H1 (cell line): ENCODE measurements at regions of chr12 and their contacts with region 1.

Region 1: DNA sequence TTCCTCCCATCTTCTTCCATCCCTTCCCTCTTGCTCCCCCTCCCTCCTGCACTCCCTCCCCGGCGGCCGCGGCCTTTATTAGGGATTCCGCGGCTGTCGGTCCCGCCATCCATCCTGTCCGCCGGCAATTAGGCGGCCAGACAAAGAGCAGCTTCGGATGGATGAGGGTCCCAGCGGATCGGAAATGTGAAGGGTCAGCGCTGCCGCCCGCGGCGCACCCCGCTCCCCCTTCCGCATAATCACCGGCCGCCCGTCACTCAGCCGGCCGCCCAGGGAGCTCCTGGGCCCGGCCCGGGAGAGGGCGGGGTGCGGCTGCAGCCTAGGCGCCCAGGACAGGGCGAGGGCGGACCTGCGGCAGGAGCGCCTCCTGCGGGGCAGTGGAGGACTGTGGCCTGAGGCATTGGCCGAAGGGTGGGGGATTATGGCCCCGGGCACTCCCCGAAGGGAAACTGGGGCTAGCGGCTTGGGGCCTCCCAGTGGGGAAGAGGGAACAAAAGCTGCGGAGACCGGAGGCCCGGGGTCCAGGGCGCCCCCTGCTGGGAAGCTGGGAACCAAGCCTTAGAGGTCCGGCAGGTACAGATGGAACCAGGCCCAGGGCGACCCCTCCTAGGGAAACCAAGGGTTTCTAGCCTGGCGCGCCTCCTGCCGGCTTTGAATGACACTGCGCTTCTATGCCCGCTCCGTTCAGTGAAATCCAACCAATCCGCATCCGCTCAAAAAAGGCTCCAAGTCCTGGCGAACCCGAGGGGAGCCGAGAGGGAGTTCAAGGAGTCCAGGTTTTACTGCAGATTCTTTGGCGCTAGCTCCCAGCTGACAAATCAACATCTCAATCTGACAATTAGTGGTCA is 4.4 kb upstream of the DNAJC22 start:
- DNase-seq: peak; percentile 93 to 99
- H3K4me3 ChIP-seq: peak overlapping the region; percentile 34 to 78 (median 67)
- H3K27ac ChIP-seq: no peak overlapping the region
- H3K4me1 ChIP-seq: peaks cover 4 to 61% (median 41%) of the 10 kb centered on the region in 4 experiments
- H3K27me3 ChIP-seq: peaks cover 81 to 99% (median 97%) of the 10 kb centered on the region in 4 experiments
- CTCF ChIP-seq: peak; percentile 71 to 93 (median 90)
- EP300 ChIP-seq: no peak; a peak in 1 of 3 replicates
- POLR2A ChIP-seq: no peak
- RAD21 ChIP-seq: peak; percentile 59 to 63

Region 2: GRCh38 chr12:49033611-49034316 is 308.5 kb before region 1 on chr12:
- CTCF ChIA-PET with region 1: no interaction called
- POLR2A ChIA-PET with region 1: no interaction called
- DNase-seq: no peak
- H3K4me3 ChIP-seq: no peak overlapping the region
- H3K27ac ChIP-seq: no peak overlapping the region
- H3K4me1 ChIP-seq: no peaks in the 10 kb centered on the region
- H3K27me3 ChIP-seq: no peaks in the 10 kb centered on the region
- CTCF ChIP-seq: no peak
- EP300 ChIP-seq: no peak
- POLR2A ChIP-seq: no peak
- RAD21 ChIP-seq: no peak

Region 3: DNA sequence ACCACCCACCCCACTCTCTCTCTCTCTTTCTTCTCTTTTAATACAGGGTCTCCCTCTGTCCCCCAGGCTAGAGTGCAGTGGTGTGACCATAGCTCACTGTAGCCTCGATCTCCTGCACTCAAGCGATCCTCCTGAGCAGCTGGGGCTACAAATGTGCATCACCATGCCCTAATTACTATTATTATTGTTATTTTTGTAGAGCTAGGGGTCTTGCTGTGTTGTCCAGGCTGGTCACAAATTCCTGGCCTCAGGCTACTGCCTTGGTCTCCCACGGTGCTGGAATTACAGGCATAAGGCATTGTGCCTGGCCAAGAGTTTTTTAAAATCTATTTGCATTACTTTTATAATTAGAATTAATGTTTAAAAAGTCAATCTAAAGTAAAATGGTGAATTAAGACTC is 188.1 kb before region 1 on chr12:
- CTCF ChIA-PET with region 1: no interaction called
- POLR2A ChIA-PET with region 1: no interaction called
- DNase-seq: no peak
- H3K4me3 ChIP-seq: no peak overlapping the region
- H3K27ac ChIP-seq: no peak overlapping the region
- H3K4me1 ChIP-seq: no peaks in the 10 kb centered on the region
- H3K27me3 ChIP-seq: no peaks in the 10 kb centered on the region
- CTCF ChIP-seq: no peak
- EP300 ChIP-seq: no peak
- POLR2A ChIP-seq: no peak
- RAD21 ChIP-seq: no peak

Region 4: DNA sequence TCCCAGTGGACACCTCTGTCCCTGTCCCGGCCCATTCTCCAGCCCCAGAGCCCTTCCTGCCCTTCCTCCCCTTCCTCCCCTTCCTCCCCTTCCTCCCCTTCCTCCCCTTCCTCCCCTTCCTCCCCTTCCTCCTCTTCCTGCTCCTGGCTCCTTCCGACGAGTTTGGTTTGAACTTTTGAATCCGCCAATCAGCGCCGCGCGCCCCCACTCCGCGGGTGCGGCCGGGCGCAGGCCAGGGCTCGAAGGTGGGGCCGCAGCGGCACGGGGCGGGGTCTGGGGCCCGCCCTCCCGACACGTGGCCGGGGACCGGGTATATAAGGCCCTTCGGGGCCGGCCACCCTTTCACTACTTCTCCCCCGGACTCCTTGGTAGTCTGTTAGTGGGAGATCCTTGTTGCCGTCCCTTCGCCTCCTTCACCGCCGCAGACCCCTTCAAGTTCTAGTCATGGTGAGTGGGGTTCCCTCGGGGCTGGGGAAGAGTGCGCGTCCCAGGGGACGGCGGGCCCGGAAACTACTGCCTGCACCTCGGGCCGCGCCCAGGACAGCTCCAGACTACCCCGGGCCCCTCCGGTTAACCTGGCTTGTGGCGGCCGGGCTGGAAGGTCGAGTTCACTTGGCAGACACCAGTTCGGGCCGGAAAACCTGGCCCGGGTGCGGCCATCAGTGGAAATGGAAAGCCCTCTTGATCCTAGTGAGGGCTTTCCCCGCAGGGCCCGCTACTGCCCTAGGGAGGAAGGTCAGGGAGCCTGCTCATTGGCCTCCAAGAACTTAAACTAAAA is 77.4 kb before region 1 on chr12 and contains the start of gene TUBA1C:
- CTCF ChIA-PET with region 1: interaction called, 10 read pairs
- POLR2A ChIA-PET with region 1: interaction called, 5 read pairs
- DNase-seq: peak; percentile 85 to 97
- H3K4me3 ChIP-seq: peak within 1 kb of the TSS; percentile 80 to 94 (median 90)
- H3K27ac ChIP-seq: peak within 1 kb of the TSS; percentile 71; the same call in 1 of the 2 replicates
- H3K4me1 ChIP-seq: peaks cover 0 to 2% (median 0%) of the 10 kb centered on the region in 4 experiments; a peak in 4 of 7 replicates
- H3K27me3 ChIP-seq: no peaks in the 10 kb centered on the region
- CTCF ChIP-seq: no peak
- EP300 ChIP-seq: no peak
- POLR2A ChIP-seq: peak; percentile 97 to 99
- RAD21 ChIP-seq: no peak
- total RNA-seq, gene TUBA1C: 504 and 533 TPM in 2 replicates

Region 5: DNA sequence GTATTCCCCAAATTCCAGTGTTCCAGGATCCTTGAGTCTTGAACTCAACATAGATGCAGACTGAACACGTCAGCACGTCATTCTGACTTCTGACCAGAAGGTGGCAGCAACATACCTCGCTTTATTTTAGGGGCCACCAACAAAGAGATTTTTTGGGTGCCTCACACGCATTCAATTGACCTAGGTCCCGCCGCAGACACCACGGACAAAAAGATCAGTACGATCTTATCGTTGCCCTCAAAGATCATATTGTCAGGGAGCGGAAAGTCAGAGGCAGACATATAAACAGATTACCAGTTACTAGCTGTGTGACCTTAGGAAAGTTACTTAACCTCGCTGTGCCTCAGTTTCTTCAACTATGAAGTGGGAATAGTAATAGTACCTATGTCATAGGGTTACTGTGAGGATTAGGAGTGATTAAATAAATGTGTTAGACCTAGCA is 53.9 kb before region 1 on chr12:
- CTCF ChIA-PET with region 1: interaction called, 276 read pairs
- POLR2A ChIA-PET with region 1: interaction called, 26 read pairs
- DNase-seq: peak in 1 of 2 experiments; percentile 82
- H3K4me3 ChIP-seq: no peak overlapping the region
- H3K27ac ChIP-seq: no peak overlapping the region
- H3K4me1 ChIP-seq: peaks cover 0 to 9% (median 7%) of the 10 kb centered on the region in 4 experiments; a peak in 5 of 7 replicates
- H3K27me3 ChIP-seq: peaks cover 4 to 17% (median 16%) of the 10 kb centered on the region in 4 experiments
- CTCF ChIP-seq: peak in 2 of 3 experiments; percentile 79 to 87; a peak in 3 of 4 replicates
- EP300 ChIP-seq: no peak
- POLR2A ChIP-seq: no peak
- RAD21 ChIP-seq: peak; percentile 84 to 86

Region 6: DNA sequence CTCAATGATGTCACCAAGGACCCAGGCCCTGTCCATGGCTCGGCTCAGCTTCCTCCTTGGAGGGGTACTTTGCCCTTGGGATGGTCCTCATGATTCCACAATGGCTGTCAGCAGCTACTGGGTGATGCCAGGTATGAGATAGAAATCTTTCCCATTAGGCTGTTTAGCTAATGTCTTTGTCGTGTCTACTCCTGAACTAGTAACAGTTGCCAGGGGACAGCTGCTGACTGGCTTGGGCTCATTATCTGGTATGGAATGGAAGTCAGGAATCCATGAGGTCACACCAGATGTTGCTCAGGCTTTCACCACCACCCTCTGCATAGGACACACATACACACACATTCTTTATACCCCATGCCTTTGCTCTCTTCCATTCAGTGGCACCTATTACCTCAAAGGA is 38.1 kb before region 1 on chr12:
- CTCF ChIA-PET with region 1: interaction called, 276 read pairs
- POLR2A ChIA-PET with region 1: no interaction called
- DNase-seq: no peak
- H3K4me3 ChIP-seq: no peak overlapping the region
- H3K27ac ChIP-seq: no peak overlapping the region
- H3K4me1 ChIP-seq: no peaks in the 10 kb centered on the region
- H3K27me3 ChIP-seq: no peaks in the 10 kb centered on the region; a peak in 4 of 7 replicates
- CTCF ChIP-seq: no peak
- EP300 ChIP-seq: no peak
- POLR2A ChIP-seq: no peak
- RAD21 ChIP-seq: no peak

Region 7: GRCh38 chr12:49331380-49332222 is 10.7 kb before region 1 on chr12:
- CTCF ChIA-PET with region 1: interaction called, 193 read pairs
- POLR2A ChIA-PET with region 1: interaction called, 32 read pairs
- DNase-seq: peak in 1 of 2 experiments; percentile 68
- H3K4me3 ChIP-seq: no peak overlapping the region
- H3K27ac ChIP-seq: no peak overlapping the region
- H3K4me1 ChIP-seq: no peaks in the 10 kb centered on the region; a peak in 2 of 7 replicates
- H3K27me3 ChIP-seq: peaks cover 33 to 50% (median 43%) of the 10 kb centered on the region in 4 experiments
- CTCF ChIP-seq: peak; percentile 86 to 89 (median 88)
- EP300 ChIP-seq: no peak
- POLR2A ChIP-seq: no peak
- RAD21 ChIP-seq: peak; percentile 86 to 93

Region 8: GRCh38 chr12:49388682-49389386 is 46.5 kb after region 1 on chr12:
- CTCF ChIA-PET with region 1: no interaction called
- POLR2A ChIA-PET with region 1: no interaction called
- DNase-seq: peak; percentile 58 to 90
- H3K4me3 ChIP-seq: peak overlapping the region in 1 of 4 experiments; percentile 32; a peak in 1 of 8 replicates
- H3K27ac ChIP-seq: no peak overlapping the region
- H3K4me1 ChIP-seq: peaks cover 0 to 4% (median 2%) of the 10 kb centered on the region in 4 experiments; a peak in 3 of 7 replicates
- H3K27me3 ChIP-seq: peaks cover 0 to 2% (median 0%) of the 10 kb centered on the region in 4 experiments; a peak in 1 of 7 replicates
- CTCF ChIP-seq: peak; percentile 87 to 91 (median 87)
- EP300 ChIP-seq: 0 out of 3 replicates have a peak, but pooled peaks of 1 of the 2 experiments have one; percentile 58
- POLR2A ChIP-seq: no peak
- RAD21 ChIP-seq: peak; percentile 41 to 54; a peak in 3 of 4 replicates

Region 9: DNA sequence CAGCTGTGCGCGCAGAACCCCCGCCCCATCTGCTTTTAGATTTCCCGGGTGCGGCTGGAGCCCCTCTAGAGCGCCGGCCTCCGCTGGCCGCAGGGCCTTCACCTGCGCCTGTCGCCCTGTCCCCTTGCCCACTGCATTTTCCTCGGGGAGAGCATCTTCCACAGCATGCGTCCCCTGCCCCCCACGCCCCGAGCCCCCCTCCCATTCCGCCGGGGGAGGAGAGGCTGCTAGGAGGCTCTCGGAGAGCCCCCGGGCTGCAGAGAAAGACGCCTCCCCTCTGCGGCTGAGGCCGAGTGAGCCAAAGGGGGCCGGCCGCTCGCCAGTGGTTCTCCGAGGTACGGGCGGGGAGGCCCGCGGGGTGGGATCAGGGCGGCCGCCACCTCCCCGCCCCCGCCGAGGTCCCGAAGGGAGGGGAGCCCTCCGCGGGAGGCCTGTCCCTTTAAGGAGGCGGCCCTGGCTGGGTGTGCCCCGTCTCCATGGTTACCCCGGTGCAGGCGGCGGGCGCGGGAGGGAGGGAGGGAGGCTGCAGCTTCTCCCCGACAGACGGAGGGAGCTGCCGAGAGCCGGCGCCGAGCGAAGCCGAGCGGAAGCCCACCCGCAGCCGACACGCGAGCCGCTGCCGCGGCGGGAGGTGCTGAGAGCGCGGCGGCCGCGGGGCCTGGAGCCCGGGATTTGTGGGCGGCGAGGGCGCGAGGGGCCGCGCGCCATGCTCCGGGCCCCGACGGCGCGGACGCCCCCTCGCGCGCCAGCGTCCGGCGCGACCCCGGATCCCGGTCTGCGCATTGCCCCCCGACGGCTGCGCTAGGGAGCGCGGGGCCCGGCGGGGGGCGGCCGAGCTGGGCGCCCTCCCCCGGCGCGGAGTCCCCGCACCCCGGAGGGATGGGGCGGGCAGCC is 196.5 kb after region 1 on chr12 and contains the start of gene KCNH3:
- CTCF ChIA-PET with region 1: interaction called, 22 read pairs
- POLR2A ChIA-PET with region 1: interaction called, 5 read pairs
- DNase-seq: peak in 1 of 2 experiments; percentile 76
- H3K4me3 ChIP-seq: peak within 1 kb of the TSS; percentile 29 to 56 (median 38)
- H3K27ac ChIP-seq: no peak within 1 kb of the TSS
- H3K4me1 ChIP-seq: peaks cover 0 to 25% (median 9%) of the 10 kb centered on the region in 4 experiments; a peak in 6 of 7 replicates
- H3K27me3 ChIP-seq: peaks cover 64 to 87% (median 84%) of the 10 kb centered on the region in 4 experiments
- CTCF ChIP-seq: no peak
- EP300 ChIP-seq: no peak
- POLR2A ChIP-seq: no peak
- RAD21 ChIP-seq: no peak
- total RNA-seq, gene KCNH3: 0.24 and 0.36 TPM in 2 replicates

Region 10: GRCh38 chr12:49553512-49554088 is 211.3 kb after region 1 on chr12:
- CTCF ChIA-PET with region 1: interaction called, 25 read pairs
- POLR2A ChIA-PET with region 1: interaction called, 3 read pairs
- DNase-seq: no peak
- H3K4me3 ChIP-seq: no peak overlapping the region
- H3K27ac ChIP-seq: no peak overlapping the region
- H3K4me1 ChIP-seq: peaks cover 0 to 12% (median 8%) of the 10 kb centered on the region in 4 experiments; a peak in 6 of 7 replicates
- H3K27me3 ChIP-seq: peaks cover 4 to 28% (median 20%) of the 10 kb centered on the region in 4 experiments
- CTCF ChIP-seq: peak in 2 of 3 experiments; percentile 82 to 99; a peak in 3 of 4 replicates
- EP300 ChIP-seq: no peak
- POLR2A ChIP-seq: no peak
- RAD21 ChIP-seq: peak; percentile 75 to 85